H1 (cell line): ENCODE measurements at regions of chr6 and their contacts with region 1.

Region 1: GRCh38 chr6:103122766-103123601 is 1729.5 kb downstream of the GRIK2 start:
- DNase-seq: peak; percentile 56 to 88
- H3K4me3 ChIP-seq: no peak overlapping the region
- H3K27ac ChIP-seq: no peak overlapping the region
- H3K4me1 ChIP-seq: no peaks in the 10 kb centered on the region; a peak in 1 of 7 replicates
- H3K27me3 ChIP-seq: no peaks in the 10 kb centered on the region
- CTCF ChIP-seq: peak; percentile 59 to 78 (median 69)
- EP300 ChIP-seq: no peak
- POLR2A ChIP-seq: no peak
- RAD21 ChIP-seq: peak; percentile 92 to 94

Region 2: GRCh38 chr6:102848796-102849195 is 274.2 kb before region 1 on chr6:
- CTCF ChIA-PET with region 1: interaction called, 23 read pairs
- POLR2A ChIA-PET with region 1: no interaction called
- DNase-seq: no peak
- H3K4me3 ChIP-seq: no peak overlapping the region
- H3K27ac ChIP-seq: no peak overlapping the region
- H3K4me1 ChIP-seq: no peaks in the 10 kb centered on the region
- H3K27me3 ChIP-seq: no peaks in the 10 kb centered on the region
- CTCF ChIP-seq: no peak
- EP300 ChIP-seq: no peak
- POLR2A ChIP-seq: no peak
- RAD21 ChIP-seq: no peak

Region 3: DNA sequence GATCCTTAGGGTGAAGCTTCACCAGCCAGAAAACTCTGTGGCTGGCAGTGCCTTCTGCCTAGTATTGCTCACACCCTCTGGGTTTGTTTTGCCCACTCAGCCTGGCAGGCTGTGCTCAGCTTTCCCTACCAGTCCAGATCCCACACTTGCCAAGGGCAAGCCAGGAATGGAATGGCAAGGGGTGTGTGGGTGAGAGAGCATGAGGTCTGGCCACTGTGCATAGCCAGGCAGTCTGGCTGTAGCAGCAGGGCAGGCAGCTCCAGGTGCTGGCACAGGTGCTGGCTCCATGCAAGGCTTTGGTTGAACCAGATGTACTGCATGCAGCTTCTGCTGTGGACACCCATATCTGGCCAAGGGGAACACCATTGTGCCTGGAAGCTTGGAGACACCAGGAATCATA is 16.4 kb after region 1 on chr6:
- CTCF ChIA-PET with region 1: interaction called, 10 read pairs
- POLR2A ChIA-PET with region 1: no interaction called
- DNase-seq: no peak
- H3K4me3 ChIP-seq: no peak overlapping the region
- H3K27ac ChIP-seq: no peak overlapping the region
- H3K4me1 ChIP-seq: no peaks in the 10 kb centered on the region
- H3K27me3 ChIP-seq: peaks cover 0 to 1% (median 0%) of the 10 kb centered on the region in 4 experiments; a peak in 1 of 7 replicates
- CTCF ChIP-seq: no peak
- EP300 ChIP-seq: no peak
- POLR2A ChIP-seq: no peak
- RAD21 ChIP-seq: no peak